ENCODE measurements at regions of chr1 and their contacts with region 1.

Region 1: DNA sequence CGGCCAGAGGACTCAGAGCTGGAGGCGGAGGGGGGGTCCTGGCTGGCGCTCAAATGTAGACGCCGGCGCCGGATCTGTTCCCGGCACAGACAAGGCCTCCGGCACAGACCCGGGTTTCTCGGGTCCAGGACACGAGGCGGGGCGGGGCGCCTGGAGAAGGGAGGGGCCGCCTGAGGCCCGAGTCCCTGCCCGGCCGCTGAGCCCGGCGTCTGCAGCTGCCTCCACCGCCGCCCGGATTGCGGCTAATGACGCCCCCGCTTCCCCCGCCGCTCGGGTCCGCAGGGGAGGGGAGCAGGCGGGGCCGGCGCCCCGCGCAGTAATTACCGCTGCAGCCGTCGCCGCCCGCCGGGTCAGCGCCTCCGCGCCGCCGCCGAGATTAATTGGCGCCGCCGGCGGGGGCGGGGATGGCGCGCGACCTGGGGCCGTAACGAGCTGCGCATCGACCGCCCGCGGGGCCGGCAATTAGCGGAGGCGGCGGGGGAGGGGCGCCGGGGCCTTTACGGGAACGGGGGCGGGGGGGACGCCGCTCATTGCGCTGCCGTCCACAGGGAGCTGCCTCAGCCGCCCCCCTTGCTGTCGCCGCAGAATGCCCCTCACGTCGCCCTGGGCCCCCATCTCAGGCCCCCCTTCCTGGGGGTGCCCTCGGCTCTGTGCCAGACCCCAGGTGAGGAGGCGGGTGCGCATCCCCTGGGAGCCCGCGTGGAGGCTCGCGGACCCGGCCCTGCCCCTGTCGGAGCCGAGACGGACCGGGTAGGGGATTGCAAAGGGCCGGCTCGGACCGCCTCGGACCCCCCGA is 17.3 kb downstream of the NOC2L start:
- DNase-seq: peak; percentile 73 to 94
- H3K4me3 ChIP-seq: peak overlapping the region; percentile 41 to 61 (median 44)
- H3K27ac ChIP-seq: peak overlapping the region; percentile 50 to 84 (median 81)
- H3K4me1 ChIP-seq: peaks cover 36 to 77% (median 52%) of the 10 kb centered on the region in 4 donors
- H3K27me3 ChIP-seq: peaks cover 0 to 71% (median 47%) of the 10 kb centered on the region in 3 donors
- CTCF ChIP-seq: no peak
- EP300 ChIP-seq: no peak
- POLR2A ChIP-seq: no peak

Region 2: DNA sequence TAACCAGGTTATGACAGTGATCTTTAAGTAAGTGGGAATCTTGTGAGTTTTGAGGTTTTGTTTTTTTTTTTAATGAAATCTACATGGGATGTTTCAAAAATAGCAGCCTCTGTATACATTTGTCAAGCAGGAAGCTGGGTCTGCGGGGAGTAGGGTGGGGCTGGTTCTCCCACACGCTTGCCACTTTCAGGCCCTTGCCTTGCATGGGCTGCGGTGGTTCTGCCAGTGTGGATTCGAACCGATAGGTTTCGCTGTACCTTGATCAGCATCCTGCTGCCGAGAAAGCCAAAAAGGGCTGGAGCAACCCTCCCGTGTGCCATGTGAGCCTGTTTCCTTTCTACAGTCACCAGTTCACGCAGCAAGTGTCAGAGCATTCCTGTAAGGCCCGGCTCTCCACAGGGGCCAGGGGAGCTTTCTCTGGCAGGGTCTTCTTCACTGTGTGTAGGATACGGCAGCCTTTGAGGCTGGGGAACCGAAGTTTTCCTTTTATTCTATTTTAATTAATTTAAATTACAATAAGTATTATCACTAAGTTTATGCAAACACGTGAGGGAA is 97.2 kb before region 1 on chr1:
- intact Hi-C with region 1: no loop called
- DNase-seq: no peak
- H3K4me3 ChIP-seq: no peak overlapping the region
- H3K27ac ChIP-seq: no peak overlapping the region
- H3K4me1 ChIP-seq: no peaks in the 10 kb centered on the region
- H3K27me3 ChIP-seq: no peaks in the 10 kb centered on the region
- CTCF ChIP-seq: no peak
- EP300 ChIP-seq: no peak
- POLR2A ChIP-seq: no peak

Region 3: DNA sequence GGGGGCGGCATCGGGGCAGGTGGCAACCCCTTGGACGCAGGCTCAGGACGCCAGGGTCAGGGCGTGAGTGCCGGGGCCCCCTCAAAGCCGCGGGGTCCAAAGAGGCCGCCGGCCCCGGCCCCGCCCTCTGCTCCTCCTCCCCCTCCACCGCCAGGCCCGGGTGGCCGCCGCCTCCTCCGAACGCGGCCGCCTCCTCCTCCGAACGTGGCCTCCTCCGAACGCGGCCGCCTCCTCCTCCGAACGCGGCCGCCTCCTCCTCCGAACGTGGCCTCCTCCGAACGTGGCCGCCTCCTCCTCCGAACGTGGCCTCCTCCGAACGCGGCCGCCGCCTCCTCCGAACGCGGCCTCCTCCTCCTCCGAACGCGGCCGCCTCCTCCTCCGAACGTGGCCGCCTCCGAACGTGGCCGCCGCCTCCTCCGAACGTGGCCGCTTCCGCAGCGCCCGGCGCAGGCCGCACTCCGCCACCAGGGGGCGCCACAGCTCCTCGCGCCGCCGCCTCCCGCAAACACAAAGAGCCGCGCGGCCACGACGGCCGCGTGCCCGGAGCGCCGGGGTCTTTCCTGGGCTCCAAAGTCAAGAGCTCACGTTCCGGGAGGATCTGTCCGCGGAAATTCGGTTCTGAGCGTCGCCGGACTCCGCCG is 37.4 kb before region 1 on chr1:
- intact Hi-C with region 1: loop called (anchors 5 kb)
- DNase-seq: peak; percentile 87 to 96
- H3K4me3 ChIP-seq: peak overlapping the region; percentile 31 to 55 (median 46)
- H3K27ac ChIP-seq: peak overlapping the region in 3 of 5 donors; percentile 5 to 64 (median 26)
- H3K4me1 ChIP-seq: peaks cover 22 to 39% (median 30%) of the 10 kb centered on the region in 4 donors
- H3K27me3 ChIP-seq: peaks cover 0 to 45% (median 8%) of the 10 kb centered on the region in 3 donors
- CTCF ChIP-seq: peak in 5 of 7 experiments; percentile 30 to 99 (median 95)
- EP300 ChIP-seq: no peak
- POLR2A ChIP-seq: no peak

Region 4: GRCh38 chr1:1059494-1060280 is 117.9 kb after region 1 on chr1:
- intact Hi-C with region 1: no loop called
- DNase-seq: peak; percentile 94 to 97
- H3K4me3 ChIP-seq: peak overlapping the region; percentile 54 to 82 (median 62)
- H3K27ac ChIP-seq: peak overlapping the region in 1 of 5 donors; percentile 12
- H3K4me1 ChIP-seq: peaks cover 41 to 54% (median 53%) of the 10 kb centered on the region in 4 donors
- H3K27me3 ChIP-seq: peaks cover 11 to 82% (median 70%) of the 10 kb centered on the region in 3 donors
- CTCF ChIP-seq: peak in 1 of 7 experiments; percentile 9
- EP300 ChIP-seq: no peak
- POLR2A ChIP-seq: no peak

Measured in stomach (tissue), 19 donors.